GM10248 (cell line): ENCODE measurements at regions of chr1 and their contacts with region 1.

Region 1: GRCh38 chr1:24201941-24202440 is 14.9 kb upstream of the IFNLR1 start:
- DNase-seq: peak; percentile 50
- CTCF ChIP-seq: peak; percentile 85

Region 2: GRCh38 chr1:24181619-24182018 is 20.4 kb before region 1 on chr1:
- CTCF ChIA-PET with region 1: interaction called, 40 read pairs
- POLR2A ChIA-PET with region 1: no interaction called
- DNase-seq: no peak
- CTCF ChIP-seq: no peak

Region 3: GRCh38 chr1:24222008-24222842 is 20.2 kb after region 1 on chr1:
- CTCF ChIA-PET with region 1: interaction called, 14 read pairs
- POLR2A ChIA-PET with region 1: no interaction called
- DNase-seq: no peak
- CTCF ChIP-seq: no peak

Region 4: DNA sequence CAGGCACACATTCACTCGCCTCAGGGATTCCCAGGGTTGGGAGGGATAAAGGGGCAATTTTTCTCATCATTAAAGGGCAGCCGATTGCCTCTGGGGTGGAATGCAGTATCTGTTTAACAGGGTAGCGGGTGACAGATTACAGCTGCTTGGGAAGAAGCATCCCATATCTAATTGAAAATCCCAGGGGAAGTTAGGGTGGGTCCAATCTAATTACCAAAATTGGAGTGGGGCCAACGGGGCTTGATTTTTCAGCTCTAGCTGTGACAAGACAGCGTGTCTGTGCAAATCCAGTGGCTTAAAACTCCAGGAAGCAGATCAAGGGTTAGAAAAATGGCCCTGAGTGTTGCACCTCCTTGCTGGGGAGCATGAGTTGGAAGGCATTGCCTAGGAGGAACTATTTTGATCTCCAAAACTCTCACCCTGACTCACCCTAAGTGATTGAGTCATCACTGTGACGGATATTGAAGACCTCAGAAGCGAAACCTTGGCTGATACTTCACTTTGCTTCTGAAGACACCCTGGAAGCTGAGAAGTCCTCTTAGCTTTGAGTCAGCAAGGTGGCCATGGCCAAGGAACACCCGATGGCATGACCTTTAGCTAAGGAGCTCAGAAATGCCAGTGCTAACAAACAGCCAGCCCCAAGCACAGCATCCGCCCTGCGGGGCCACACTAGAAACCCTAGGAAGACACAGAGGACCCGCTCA is 163.1 kb after region 1 on chr1:
- CTCF ChIA-PET with region 1: interaction called, 11 read pairs
- POLR2A ChIA-PET with region 1: no interaction called
- DNase-seq: peak; percentile 81
- CTCF ChIP-seq: no peak

Region 5: GRCh38 chr1:24391882-24392603 is 190.1 kb after region 1 on chr1:
- CTCF ChIA-PET with region 1: interaction called, 433 read pairs
- POLR2A ChIA-PET with region 1: interaction called, 3 read pairs
- DNase-seq: peak; percentile 78
- CTCF ChIP-seq: peak; percentile 84

Region 6: DNA sequence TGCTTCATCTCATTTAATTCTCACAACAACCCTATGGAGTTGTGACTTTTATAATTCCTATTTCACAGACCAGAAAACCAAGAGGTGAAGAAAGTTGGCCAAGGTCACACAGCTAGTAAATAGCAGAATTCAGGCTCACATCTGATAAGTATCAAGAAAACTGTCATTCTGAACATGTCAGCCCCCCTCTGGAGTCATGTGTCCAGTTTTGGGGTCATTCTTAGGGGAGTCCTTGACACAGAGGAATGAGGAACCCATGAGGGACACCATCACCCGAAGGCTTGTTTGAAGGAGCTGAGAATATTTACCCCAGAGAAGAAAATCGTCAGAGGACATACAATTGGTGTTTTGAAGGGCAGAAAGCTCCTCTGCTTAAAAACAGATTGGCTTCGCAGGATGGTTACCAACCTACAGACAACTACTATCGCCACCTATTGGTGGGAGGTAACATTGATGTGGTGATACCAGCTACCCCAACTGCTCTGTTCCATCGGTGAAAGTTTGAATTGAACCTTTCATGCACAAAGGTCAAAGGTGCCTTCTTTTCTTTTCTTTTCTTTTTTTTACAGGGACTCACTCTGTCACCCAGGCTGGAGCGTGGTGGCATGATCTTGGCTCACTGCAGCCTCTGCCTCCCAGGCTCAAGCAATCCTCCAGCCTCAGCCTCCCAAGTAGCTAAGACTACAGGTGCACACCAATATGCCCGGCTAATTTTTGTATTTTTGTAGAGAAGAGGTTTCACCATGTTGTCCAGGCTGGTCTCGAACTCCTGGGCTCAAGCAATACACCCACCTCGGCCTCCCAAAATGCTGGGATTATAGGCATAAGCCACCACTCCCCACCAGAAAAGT is 385.2 kb after region 1 on chr1:
- CTCF ChIA-PET with region 1: interaction called, 27 read pairs
- POLR2A ChIA-PET with region 1: no interaction called
- DNase-seq: peak; percentile 79
- CTCF ChIP-seq: peak; percentile 68